Dendritic cell treated with granulocyte-macrophage colony-stimulating factor and Interleukin-4, amounts not matched to agents 40 ng/mL and 50 ng/mL, for 4 days (primary cell): ENCODE measurements at regions of chr7 and their contacts with region 1.

Region 1: GRCh38 chr7:103148994-103149807 is at the start of gene NAPEPLD:
- H3K4me3 Mint-ChIP-seq: peak within 1 kb of the TSS; percentile 92
- H3K27ac Mint-ChIP-seq: peak within 1 kb of the TSS; percentile 96
- H3K4me1 Mint-ChIP-seq: peaks cover 25% of the 10 kb centered on the region
- H3K27me3 Mint-ChIP-seq: peaks cover 4% of the 10 kb centered on the region

Region 2: DNA sequence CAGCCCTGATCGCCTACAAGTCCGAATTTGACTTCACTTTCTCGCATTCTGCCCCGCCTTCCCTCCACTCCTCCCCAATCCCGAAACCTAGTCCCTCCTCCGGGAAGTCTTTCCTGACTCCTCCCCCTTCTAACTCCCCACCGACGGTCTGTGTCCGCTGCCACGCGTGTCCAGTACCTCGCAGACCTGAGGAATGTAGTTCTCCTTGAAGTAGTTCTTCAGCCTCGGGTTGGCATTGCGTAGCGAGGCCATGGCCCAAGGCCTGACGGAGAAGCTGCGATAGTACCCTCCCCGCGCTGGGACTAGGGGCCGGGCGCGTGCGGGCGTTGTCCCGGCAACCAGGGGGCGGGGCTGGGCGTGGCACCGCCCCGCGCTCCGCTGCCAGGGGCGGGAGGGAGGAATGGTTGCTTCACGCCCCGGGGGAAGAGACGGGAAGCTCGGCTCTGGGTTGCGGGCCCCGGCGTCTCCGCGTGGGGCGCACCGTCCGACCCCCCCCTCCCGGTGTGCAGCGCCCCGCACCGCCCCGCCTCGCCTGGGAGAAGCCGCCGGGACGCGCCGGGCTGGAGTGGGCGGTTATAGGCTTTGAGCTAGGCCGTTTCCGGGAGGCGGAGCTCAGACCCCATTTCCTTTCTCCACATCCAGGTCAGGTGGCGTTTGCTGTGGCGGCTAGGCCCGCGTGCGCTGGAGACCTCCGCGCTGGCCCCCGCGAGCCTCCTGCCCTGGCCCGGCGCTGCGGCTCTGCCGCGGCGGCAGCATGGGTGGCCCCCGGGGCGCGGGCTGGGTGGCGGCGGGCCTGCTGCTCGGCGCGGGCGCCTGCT is 74.5 kb before region 1 on chr7 and contains the starts of genes ARMC10 and FBXL13:
- intact Hi-C with region 1: loop called (anchors 2 kb)
- H3K4me3 Mint-ChIP-seq: peak within 1 kb of the TSS; percentile 89
- H3K27ac Mint-ChIP-seq: peak within 1 kb of the TSS; percentile 81
- H3K4me1 Mint-ChIP-seq: peaks cover 32% of the 10 kb centered on the region
- H3K27me3 Mint-ChIP-seq: no peaks in the 10 kb centered on the region